Tibial artery (tissue), 4 donors: ENCODE measurements at regions of chr15 and their contacts with region 1.

Region 1: GRCh38 chr15:94653071-94653470 is 421.7 kb downstream of the MCTP2 start:
- DNase-seq: no peak
- H3K4me3 ChIP-seq: no peak overlapping the region
- H3K27ac ChIP-seq: no peak overlapping the region
- H3K4me1 ChIP-seq: no peaks in the 10 kb centered on the region
- H3K27me3 ChIP-seq: no peaks in the 10 kb centered on the region
- CTCF ChIP-seq: no peak

Region 2: DNA sequence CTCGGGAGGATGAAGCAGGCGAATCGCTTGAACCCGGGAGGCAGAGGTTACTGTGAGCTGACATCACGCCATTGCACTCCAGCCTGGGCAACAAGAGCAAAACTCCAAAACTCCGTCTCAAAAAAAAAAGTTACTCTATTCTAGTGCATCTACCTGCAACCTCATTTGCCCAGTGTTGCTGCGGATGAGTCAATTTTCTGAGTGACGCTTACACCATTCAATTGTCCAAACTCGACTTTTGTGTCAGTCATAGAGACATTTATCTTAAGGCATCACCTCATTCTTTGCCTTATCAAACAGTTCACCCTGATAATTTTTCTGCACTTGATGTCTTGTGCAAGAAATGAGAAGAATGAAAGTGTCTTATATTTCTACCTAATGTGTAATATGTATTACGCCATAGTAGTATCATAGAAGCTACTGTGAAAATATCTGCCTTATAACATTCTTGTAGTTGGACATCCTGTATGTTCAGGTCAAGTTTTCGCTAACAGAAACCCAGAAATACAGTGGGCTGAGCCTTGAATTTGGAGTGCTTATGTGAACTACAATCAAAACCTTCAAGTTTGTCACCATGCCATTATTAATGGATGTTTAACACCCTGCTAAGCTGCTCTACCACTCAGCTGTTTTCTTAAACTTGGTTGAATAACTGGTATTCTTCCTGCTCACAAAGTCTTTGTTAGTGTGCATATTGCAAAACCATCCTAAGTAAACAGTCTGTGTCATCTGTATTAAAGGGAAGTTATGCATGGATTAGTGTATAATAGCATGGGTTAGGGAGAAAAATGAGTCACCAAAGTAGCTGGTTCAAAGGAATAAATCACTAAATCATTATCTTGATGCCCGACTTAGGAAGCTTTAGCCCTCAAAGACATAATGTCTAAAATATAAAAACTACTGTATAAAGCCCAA is 1146.5 kb after region 1 on chr15:
- intact Hi-C with region 1: loop called (anchors 5 kb)
- DNase-seq: no peak
- H3K4me3 ChIP-seq: no peak overlapping the region
- H3K27ac ChIP-seq: no peak overlapping the region
- H3K4me1 ChIP-seq: no peaks in the 10 kb centered on the region
- H3K27me3 ChIP-seq: no peaks in the 10 kb centered on the region
- CTCF ChIP-seq: no peak